Gastrocnemius medialis (tissue), 4 donors: ENCODE measurements at regions of chr11 and their contacts with region 1.

Region 1: GRCh38 chr11:86041975-86042378 is 26.9 kb downstream of the PICALM start:
- DNase-seq: peak; percentile 54 to 60
- ATAC-seq: peak; percentile 76 to 82
- H3K4me3 ChIP-seq: peak overlapping the region; percentile 30 to 69 (median 42)
- H3K27ac ChIP-seq: peak overlapping the region; percentile 74 to 83 (median 80)
- H3K4me1 ChIP-seq: peaks cover 81 to 84% of the 10 kb centered on the region in 2 donors
- H3K27me3 ChIP-seq: no peaks in the 10 kb centered on the region
- CTCF ChIP-seq: peak; percentile 85 to 96 (median 90)
- POLR2A ChIP-seq: no peak

Region 2: DNA sequence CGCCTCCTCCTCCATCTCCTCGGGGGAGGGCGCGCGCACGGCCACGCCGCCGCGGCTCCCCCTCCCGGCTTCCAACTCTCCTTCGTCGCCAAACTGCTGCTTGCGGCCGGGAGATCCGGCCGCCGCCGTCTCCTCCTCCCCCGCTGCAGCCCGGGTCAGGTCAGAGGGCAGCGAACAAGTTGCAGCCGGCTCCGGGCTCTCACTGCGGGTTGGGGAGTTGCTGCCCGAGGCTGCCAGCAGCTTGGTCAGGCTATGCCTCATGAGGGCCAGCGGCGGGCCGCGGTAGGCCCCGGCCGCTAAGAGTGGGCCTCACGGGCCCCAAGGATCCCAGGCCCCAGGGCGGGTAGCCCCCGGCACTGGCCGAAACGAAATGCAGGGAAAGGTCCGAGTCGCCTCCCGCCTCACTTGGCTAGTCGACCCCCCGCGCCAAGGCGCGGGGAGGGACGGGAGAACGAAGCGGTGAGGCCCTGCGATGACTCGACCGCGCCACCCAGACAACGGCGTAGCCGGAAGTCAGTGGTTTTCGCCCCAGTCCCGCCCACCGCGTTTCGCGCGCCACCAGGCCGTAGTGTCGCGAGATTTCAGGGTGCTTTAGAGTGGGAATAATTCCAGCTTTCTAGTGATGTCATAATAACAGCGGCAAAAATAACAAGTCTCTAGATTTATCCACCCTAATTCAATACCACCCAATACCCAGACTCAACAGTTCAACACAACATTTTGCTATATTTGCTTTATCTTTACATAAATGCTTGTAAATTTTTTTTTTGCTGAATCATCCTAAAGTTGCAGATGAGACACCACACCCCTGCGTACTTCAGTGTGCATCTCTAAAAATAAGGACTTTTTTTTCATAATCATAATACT is 377.1 kb before region 1 on chr11 and contains the start of gene CREBZF:
- in situ Hi-C with region 1: loop called in 1 of 4 experiments (anchors 25 kb)
- intact Hi-C with region 1: no loop called
- DNase-seq: peak; percentile 88 to 91
- ATAC-seq: peak; percentile 94
- H3K4me3 ChIP-seq: peak within 1 kb of the TSS; percentile 91 to 98 (median 97)
- H3K27ac ChIP-seq: peak within 1 kb of the TSS; percentile 93 to 99 (median 98)
- H3K4me1 ChIP-seq: peaks cover 35 to 42% of the 10 kb centered on the region in 2 donors
- H3K27me3 ChIP-seq: no peaks in the 10 kb centered on the region
- CTCF ChIP-seq: peak in 1 of 5 experiments; percentile 15
- POLR2A ChIP-seq: peak; percentile 96 to 98
- total RNA-seq, gene CREBZF: 15.3 to 52.3 (median 16.4) TPM

Region 3: DNA sequence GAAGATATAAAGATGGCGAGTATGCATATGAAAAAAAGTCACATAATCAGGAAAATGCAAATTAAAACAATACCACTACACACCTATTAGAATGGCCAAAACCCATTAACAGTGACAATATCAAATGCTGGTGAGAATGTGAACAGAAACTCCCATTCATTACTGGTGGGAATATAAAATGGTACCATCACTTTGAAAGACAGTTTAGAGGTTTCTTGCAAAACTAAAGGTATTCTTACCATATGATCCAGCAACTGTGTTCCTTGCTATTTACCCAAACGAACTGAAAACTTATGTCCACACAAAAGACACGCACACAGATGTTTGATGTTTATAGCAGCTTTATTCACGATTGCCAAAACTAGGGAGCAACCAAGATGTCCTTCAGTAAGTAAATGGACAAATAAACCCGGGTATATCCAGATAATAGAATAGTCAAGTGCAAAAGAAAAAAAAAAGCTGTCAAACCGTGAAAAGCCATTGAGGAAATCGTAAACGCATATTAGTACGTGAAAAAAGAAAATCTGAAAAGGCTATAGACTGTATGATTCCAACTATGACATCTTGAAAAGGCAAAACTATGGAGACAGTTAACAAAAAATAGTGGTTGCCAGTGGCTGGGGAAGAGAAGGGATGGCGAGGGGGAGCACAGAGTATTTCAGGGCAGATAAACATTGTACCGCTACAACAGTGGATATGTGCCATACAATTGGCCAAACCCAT is 19.7 kb after region 1 on chr11:
- in situ Hi-C with region 1: no loop called
- intact Hi-C with region 1: loop called (anchors 2 kb)
- DNase-seq: no peak
- ATAC-seq: no peak
- H3K4me3 ChIP-seq: peak overlapping the region in 2 of 4 donors; percentile 5 to 8
- H3K27ac ChIP-seq: peak overlapping the region; percentile 97 to 100 (median 98)
- H3K4me1 ChIP-seq: peaks cover 77 to 81% of the 10 kb centered on the region in 2 donors
- H3K27me3 ChIP-seq: no peaks in the 10 kb centered on the region
- CTCF ChIP-seq: no peak
- POLR2A ChIP-seq: no peak

Region 4: DNA sequence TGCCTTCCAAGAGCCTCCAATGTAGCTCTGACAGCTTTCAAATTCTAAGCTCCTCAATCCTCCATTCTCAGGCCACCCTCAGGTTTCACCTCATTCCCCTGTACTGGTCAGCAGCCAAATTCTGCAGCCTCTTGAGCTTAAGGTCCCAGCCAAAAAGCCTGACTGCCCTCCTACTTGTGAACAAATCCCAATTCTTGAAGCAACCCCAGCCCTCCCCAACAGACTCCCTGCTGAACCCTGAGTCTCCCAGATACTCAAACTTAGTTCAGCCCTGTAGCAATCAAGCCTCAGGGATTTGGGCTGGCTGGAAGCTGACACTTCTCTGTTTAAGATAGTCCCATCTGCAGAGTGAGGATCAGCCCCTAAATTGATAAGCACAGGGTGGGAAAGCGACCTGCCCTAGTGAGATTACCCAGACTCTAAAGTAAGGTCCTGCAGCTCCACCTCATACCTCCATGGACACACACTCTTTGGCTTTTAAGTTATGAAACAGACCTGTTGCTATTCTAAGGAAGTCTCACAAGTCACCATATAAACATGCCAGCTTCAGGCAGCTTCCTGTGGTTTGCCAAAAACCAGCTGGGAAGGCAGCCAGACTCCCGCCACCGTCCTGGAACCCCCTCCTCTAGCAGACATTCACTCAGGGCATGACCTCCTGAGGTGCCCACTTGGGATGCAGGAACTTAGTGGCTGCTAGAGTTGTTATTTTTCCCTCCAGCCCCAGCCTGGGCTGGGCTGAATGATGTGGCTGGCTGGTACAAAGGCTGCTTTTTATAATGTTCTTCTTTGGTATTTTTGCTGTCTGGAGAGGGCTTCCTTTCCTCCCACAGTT is 109.4 kb after region 1 on chr11:
- in situ Hi-C with region 1: no loop called
- intact Hi-C with region 1: no loop called
- DNase-seq: no peak
- ATAC-seq: peak in 1 of 2 donors; percentile 64
- H3K4me3 ChIP-seq: no peak overlapping the region
- H3K27ac ChIP-seq: peak overlapping the region in 1 of 4 donors; percentile 14
- H3K4me1 ChIP-seq: peaks cover 20 to 21% of the 10 kb centered on the region in 2 donors
- H3K27me3 ChIP-seq: no peaks in the 10 kb centered on the region
- CTCF ChIP-seq: no peak
- POLR2A ChIP-seq: no peak

Region 5: DNA sequence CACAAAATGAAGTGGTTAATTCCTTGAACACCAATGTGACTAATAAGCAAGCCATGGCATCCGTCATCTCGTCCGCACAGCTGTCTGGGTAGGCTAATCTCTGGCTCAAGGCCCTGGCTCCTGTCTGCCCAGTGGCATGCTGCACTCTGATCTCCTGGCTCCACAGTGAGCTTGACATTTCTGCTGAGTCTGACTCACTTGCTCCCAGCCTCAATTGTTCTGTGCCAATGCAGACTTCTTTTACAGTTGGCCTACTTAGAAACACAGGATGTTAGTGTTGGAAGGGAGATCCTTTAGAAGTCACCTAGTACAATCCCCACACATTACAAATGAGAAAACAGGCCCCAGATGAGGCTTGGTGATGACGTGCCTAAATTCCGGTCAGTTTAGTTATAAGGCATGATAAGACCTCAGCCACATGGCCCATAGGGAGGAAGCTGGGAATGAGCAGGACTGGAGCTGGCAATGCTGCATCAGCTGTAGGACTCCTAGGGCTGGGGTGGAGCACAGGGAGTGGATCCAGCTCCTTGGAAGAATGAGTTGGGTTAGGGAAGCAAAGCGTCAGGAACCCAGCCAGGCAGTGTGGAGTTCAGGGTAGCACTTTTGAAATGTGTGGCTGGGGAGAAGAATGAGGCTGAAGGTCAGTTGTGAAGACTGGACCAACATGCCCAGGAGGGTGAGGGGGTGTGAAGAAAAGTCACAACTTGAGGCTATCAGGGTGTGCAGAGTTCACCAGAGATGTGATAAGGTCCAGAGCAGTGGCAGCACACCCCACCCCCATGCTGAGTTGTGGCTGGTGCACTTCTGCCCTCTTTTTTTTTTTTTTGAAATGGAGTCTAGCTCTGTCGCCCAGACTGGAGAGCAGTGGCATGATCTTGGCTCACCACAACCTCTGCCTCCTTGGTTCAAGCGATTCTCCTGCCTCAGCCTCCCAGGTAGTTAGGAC is 132.4 kb after region 1 on chr11:
- in situ Hi-C with region 1: no loop called
- intact Hi-C with region 1: loop called (anchors 5 kb)
- DNase-seq: peak; percentile 91 to 95
- ATAC-seq: peak; percentile 98 to 99
- H3K4me3 ChIP-seq: no peak overlapping the region
- H3K27ac ChIP-seq: peak overlapping the region; percentile 83 to 88 (median 85)
- H3K4me1 ChIP-seq: peaks cover 40 to 51% of the 10 kb centered on the region in 2 donors
- H3K27me3 ChIP-seq: no peaks in the 10 kb centered on the region
- CTCF ChIP-seq: peak in 1 of 5 experiments; percentile 14
- POLR2A ChIP-seq: peak in 1 of 2 donors; percentile 12

Region 6: GRCh38 chr11:86202013-86202336 is 160.0 kb after region 1 on chr11:
- in situ Hi-C with region 1: loop called in 2 of 4 experiments (anchors 10 kb)
- intact Hi-C with region 1: no loop called
- DNase-seq: no peak
- ATAC-seq: no peak
- H3K4me3 ChIP-seq: peak overlapping the region in 3 of 4 donors; percentile 41 to 46 (median 46)
- H3K27ac ChIP-seq: peak overlapping the region in 3 of 4 donors; percentile 22 to 48 (median 43)
- H3K4me1 ChIP-seq: no peaks in the 10 kb centered on the region
- H3K27me3 ChIP-seq: no peaks in the 10 kb centered on the region
- CTCF ChIP-seq: no peak
- POLR2A ChIP-seq: no peak

Region 7: DNA sequence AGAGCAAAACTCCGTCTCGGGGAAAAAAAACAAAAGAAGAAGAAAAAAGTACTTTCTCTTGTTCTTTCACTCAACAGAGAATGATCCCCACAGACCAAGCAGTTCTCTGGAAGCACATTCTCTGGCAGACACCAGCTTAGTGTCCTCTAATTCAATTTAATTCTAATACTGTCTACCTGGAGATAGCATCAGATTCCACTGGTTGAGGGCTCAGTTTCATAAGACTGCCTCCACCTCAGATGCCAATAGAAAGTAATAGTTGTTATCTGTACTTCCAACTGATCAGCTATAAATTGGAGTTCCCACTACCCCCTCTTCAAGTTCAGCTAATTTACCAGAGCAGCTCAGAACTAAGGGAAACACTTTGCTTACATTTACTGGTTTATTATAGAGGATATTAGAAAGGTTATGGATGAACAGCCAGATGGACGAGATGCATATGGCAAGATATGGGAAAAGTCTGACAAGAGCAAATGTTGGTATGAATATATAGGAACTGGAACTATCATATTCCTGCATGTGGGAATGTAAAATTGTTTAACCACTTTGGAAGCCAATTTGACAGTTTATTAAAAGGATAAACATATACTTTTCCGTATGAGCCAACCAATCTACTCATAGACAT is 1060.1 kb after region 1 on chr11:
- in situ Hi-C with region 1: no loop called
- intact Hi-C with region 1: no loop called
- DNase-seq: no peak
- ATAC-seq: no peak
- H3K4me3 ChIP-seq: no peak overlapping the region
- H3K27ac ChIP-seq: no peak overlapping the region
- H3K4me1 ChIP-seq: no peaks in the 10 kb centered on the region
- H3K27me3 ChIP-seq: no peaks in the 10 kb centered on the region
- CTCF ChIP-seq: no peak
- POLR2A ChIP-seq: no peak